Dendritic cell treated with granulocyte-macrophage colony-stimulating factor and Interleukin-4, amounts not matched to agents 40 ng/mL and 50 ng/mL, for 4 days (primary cell): ENCODE measurements at regions of chr12 and their contacts with region 1.

Region 1: DNA sequence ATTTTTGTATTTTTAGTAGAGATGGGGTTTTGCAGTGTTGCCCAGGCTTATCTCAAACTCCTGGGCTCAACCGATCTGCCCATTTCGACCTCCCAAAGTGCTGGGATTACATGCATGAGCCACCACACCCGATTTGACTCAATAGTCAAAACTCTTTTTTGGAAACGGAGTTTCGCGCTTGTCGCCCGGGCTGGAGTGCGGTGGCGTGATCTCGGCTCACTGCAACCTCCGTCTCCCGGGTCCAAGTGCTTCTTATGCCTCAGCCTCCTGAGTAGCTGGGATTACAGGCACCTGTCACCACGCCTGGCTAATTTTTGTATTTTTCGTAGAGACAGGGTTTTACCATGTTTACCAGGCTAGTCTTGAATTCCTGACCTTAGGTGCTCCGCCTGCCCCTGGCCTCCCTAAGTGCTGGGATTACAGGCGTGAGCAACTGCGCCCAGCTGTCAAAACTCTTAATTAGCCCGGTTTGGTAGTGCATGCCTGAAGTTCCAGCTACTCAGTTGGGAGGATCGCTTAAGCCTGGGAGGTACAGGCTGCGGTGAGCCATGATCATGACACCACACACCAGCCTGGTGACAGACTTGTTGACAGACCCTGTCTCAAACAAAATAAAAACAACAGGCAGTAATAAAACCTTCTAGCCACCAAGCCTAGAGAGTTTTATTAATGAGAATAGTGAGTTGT is 12.4 kb downstream of the MED21 start:
- H3K4me3 Mint-ChIP-seq: no peak overlapping the region
- H3K27ac Mint-ChIP-seq: no peak overlapping the region
- H3K4me1 Mint-ChIP-seq: peaks cover 9% of the 10 kb centered on the region
- H3K27me3 Mint-ChIP-seq: no peaks in the 10 kb centered on the region

Region 2: DNA sequence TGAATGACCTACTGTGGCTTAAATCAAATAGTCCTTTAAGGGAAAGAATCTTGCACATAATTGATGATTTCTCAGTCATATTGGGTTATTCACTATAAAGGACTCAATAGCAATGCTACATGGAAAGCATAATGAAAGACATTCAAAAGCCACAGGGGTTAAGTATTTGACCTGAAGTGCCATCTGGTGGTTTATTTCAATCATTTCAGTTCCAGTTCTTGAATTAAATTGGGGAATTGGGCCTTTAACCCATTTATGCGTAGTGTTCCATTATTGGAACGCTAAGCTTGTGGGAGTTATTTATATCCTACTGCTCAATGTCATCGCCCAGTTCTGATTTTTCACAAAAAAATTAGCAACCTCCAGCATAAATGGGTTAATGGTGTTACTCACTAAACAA is 88.9 kb after region 1 on chr12:
- intact Hi-C with region 1: loop called (anchors 1 kb)
- H3K4me3 Mint-ChIP-seq: no peak overlapping the region
- H3K27ac Mint-ChIP-seq: no peak overlapping the region
- H3K4me1 Mint-ChIP-seq: no peaks in the 10 kb centered on the region
- H3K27me3 Mint-ChIP-seq: peaks cover 3% of the 10 kb centered on the region